HepG2 (cell line): ENCODE measurements at regions of chr2 and their contacts with region 1.

Region 1: GRCh38 chr2:20225294-20226151 is 593 bp upstream of the SDC1 start:
- DNase-seq: peak; percentile 77
- ATAC-seq: peak; percentile 84
- H3K4me3 ChIP-seq: peak overlapping the region; percentile 77 to 81 (median 77)
- H3K27ac ChIP-seq: peak overlapping the region; percentile 69
- H3K4me1 ChIP-seq: peaks cover 38% of the 10 kb centered on the region
- H3K27me3 ChIP-seq: no peaks in the 10 kb centered on the region; a peak in 1 of 5 replicates
- CTCF ChIP-seq: peak; percentile 99
- EP300 ChIP-seq: no peak
- POLR2A ChIP-seq: no peak
- RAD21 ChIP-seq: peak; percentile 98

Region 2: DNA sequence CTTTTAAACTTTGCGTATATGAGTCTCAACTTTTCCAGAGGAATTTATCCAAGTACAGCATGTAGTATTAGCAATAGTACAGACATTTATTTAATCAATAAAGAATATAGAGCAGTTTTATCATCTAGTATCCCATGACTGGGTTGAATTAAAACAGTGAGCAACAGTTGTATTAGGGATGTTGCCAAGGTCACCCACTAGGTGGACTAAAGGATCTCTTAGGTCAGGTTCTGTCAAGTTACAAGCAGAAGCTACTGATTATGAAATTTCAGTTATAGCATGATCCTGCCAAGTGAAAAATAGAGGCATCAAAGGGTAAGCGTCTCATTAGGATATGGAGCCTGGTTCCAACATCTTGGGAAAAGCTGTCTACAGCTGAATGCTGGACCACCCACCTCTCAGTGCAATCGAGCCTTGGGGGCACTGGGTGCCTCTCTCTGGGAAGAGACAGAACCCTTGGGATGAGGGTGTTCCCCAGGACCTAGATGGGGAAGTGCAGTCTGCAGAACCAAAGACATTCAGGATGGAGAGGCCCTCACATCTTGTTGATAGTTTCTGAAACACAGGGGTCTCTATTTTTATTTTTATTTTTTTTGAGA is 121.9 kb before region 1 on chr2:
- CTCF ChIA-PET with region 1: interaction called, 3 read pairs
- POLR2A ChIA-PET with region 1: interaction called, 11 read pairs
- in situ Hi-C with region 1: no loop called
- intact Hi-C with region 1: loop called (anchors 1 kb)
- DNase-seq: peak; percentile 65
- ATAC-seq: peak; percentile 65
- H3K4me3 ChIP-seq: no peak overlapping the region
- H3K27ac ChIP-seq: no peak overlapping the region
- H3K4me1 ChIP-seq: peaks cover 46% of the 10 kb centered on the region
- H3K27me3 ChIP-seq: no peaks in the 10 kb centered on the region
- CTCF ChIP-seq: peak; percentile 75
- EP300 ChIP-seq: no peak
- POLR2A ChIP-seq: no peak
- RAD21 ChIP-seq: peak; percentile 74

Region 3: GRCh38 chr2:20135631-20136050 is 89.9 kb before region 1 on chr2:
- CTCF ChIA-PET with region 1: interaction called, 18 read pairs
- POLR2A ChIA-PET with region 1: interaction called, 27 read pairs
- in situ Hi-C with region 1: loop called (anchors 5 kb)
- intact Hi-C with region 1: loop called (anchors 1 kb)
- DNase-seq: peak; percentile 74
- ATAC-seq: peak; percentile 83
- H3K4me3 ChIP-seq: no peak overlapping the region
- H3K27ac ChIP-seq: no peak overlapping the region
- H3K4me1 ChIP-seq: peaks cover 61% of the 10 kb centered on the region
- H3K27me3 ChIP-seq: peaks cover 3 to 63% of the 10 kb centered on the region in 2 experiments; a peak in 4 of 5 replicates
- CTCF ChIP-seq: peak; percentile 99
- EP300 ChIP-seq: no peak
- POLR2A ChIP-seq: no peak
- RAD21 ChIP-seq: peak; percentile 94

Region 4: GRCh38 chr2:20186078-20186854 is 39.3 kb before region 1 on chr2:
- CTCF ChIA-PET with region 1: interaction called, 9 read pairs
- POLR2A ChIA-PET with region 1: interaction called, 76 read pairs
- in situ Hi-C with region 1: loop called (anchors 5 kb)
- intact Hi-C with region 1: loop called (anchors 1 kb)
- DNase-seq: peak; percentile 94
- ATAC-seq: peak; percentile 59
- H3K4me3 ChIP-seq: peak overlapping the region; percentile 38 to 67 (median 41); a peak in 5 of 6 replicates
- H3K27ac ChIP-seq: peak overlapping the region; percentile 52
- H3K4me1 ChIP-seq: peaks cover 95% of the 10 kb centered on the region
- H3K27me3 ChIP-seq: no peaks in the 10 kb centered on the region
- CTCF ChIP-seq: no peak
- EP300 ChIP-seq: peak; percentile 39 to 46; a peak in 2 of 4 replicates
- POLR2A ChIP-seq: peak in 1 of 2 experiments; percentile 79; a peak in 2 of 4 replicates
- RAD21 ChIP-seq: no peak

Region 5: DNA sequence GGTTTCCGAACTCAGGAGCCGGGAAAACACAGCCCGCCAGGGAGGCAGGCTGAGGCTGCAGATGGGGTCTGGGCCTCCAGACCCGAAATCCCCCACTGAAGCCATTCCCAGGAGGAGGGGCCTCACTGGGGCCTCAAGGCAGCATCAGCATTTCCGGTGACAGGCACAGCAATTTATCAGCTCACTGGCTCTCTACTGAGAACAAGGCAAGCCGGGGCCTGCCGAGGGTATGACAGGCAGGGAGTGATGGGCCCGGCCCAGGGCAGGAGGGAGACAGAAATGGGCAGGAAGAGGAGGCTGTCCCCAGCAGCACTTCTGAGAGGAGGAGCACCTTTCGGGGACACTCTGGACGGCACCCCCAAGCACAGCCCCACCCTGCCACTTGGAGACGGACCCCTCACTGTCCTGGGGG is 13.1 kb before region 1 on chr2:
- CTCF ChIA-PET with region 1: no interaction called
- POLR2A ChIA-PET with region 1: interaction called, 94 read pairs
- in situ Hi-C with region 1: no loop called
- intact Hi-C with region 1: loop called (anchors 1 kb)
- DNase-seq: no peak
- ATAC-seq: peak; percentile 0; the same call in 1 of the 3 replicates
- H3K4me3 ChIP-seq: peak overlapping the region in 1 of 3 experiments; percentile 39; a peak in 1 of 6 replicates
- H3K27ac ChIP-seq: peak overlapping the region; percentile 83
- H3K4me1 ChIP-seq: peaks cover 100% of the 10 kb centered on the region
- H3K27me3 ChIP-seq: no peaks in the 10 kb centered on the region
- CTCF ChIP-seq: no peak
- EP300 ChIP-seq: no peak
- POLR2A ChIP-seq: no peak
- RAD21 ChIP-seq: no peak

Region 6: GRCh38 chr2:20391951-20392699 is 166.6 kb after region 1 on chr2:
- CTCF ChIA-PET with region 1: no interaction called
- POLR2A ChIA-PET with region 1: no interaction called
- in situ Hi-C with region 1: no loop called
- intact Hi-C with region 1: no loop called
- DNase-seq: peak; percentile 32
- ATAC-seq: peak; percentile 22
- H3K4me3 ChIP-seq: no peak overlapping the region
- H3K27ac ChIP-seq: no peak overlapping the region
- H3K4me1 ChIP-seq: peaks cover 11% of the 10 kb centered on the region
- H3K27me3 ChIP-seq: peaks cover 3 to 14% of the 10 kb centered on the region in 2 experiments
- CTCF ChIP-seq: no peak
- EP300 ChIP-seq: no peak
- POLR2A ChIP-seq: no peak
- RAD21 ChIP-seq: no peak